Left ventricle myocardium superior (tissue), 1 donor: ENCODE measurements at regions of chr5 and their contacts with region 1.

Region 1: GRCh38 chr5:22889718-22890117 is 36.6 kb upstream of the CDH12 start:
- DNase-seq: no peak
- ATAC-seq: no peak

Region 2: GRCh38 chr5:22683050-22683449 is 206.7 kb before region 1 on chr5:
- intact Hi-C with region 1: no loop called
- DNase-seq: no peak
- ATAC-seq: no peak

Region 3: DNA sequence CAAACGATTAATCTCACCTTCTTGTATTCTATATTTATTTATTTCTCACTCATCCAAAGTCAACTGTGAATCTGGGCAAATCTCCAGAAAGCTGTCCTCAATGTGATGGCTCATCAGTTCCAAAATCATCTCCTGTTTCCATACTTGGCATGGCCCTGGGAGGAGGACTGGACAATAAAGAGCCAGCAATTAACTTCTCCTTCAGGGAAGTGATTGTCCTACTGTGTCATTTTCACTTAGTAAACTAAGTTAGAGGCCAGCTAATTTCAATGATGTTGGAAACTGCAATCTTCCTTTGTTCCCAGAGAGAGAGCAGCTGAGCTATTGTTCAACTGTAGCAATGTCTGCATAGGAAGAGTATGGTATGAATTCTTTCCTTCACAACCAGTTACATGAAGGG is 54.0 kb before region 1 on chr5:
- intact Hi-C with region 1: no loop called
- DNase-seq: no peak
- ATAC-seq: peak; percentile 19

Region 4: DNA sequence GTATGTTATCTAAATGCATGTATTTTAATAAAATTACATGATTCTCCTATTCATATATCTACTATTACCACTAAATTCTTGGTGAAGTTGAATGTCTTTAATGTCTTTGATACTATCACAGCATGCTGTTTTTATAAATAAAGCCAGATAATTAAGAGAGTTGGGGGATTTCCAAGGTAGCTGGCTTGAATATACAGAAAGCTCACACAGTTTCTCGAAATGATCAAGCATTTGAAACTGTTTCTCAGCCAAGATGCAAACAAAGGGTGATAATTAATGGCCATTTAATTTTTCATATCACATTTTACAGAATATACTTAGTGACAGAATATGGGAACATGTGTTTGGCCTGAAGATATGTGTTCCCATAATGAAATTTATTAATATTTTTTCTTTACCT is 109.1 kb after region 1 on chr5:
- intact Hi-C with region 1: no loop called
- DNase-seq: no peak
- ATAC-seq: no peak

Region 5: DNA sequence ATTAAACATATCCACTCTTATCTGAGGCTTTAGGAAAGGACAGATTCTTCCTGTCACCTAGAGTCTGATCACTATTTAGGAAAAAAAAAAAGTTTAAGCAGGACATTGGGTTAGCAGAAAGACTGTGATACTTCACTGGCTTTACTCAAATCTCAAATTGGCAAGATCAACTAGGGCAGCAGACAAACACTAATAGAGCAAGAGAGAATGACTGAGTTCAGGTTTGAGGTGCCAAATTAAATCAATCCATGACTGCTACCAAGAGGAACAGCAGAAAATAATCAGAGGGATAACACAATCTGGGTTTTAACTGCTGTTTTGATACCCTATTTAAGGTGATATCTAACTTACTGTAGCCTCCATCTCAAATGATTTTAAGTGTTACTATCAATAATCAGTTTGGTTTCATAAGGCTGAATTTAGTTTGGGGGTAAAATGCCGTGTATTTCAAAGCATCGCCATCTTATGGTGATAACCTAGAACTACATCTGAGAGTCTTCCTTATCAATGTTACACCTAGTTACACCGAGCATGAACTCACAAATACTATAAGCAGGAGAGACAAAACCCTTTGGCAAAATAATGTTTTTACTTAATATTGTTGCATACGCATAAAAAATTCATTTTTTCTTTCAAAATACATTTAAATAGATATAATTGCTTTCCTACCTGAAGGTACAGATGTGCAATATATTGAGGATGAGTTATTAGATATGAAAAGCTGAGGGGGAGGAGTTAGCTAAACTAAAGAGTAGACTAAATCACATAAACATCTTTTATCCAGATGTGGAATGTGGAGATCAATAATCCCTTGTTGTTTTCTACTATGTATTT is 249.8 kb after region 1 on chr5:
- intact Hi-C with region 1: loop called (anchors 2 kb)
- DNase-seq: no peak
- ATAC-seq: peak; percentile 41